ENCODE measurements at regions of chr1 and their contacts with region 1.

Region 1: DNA sequence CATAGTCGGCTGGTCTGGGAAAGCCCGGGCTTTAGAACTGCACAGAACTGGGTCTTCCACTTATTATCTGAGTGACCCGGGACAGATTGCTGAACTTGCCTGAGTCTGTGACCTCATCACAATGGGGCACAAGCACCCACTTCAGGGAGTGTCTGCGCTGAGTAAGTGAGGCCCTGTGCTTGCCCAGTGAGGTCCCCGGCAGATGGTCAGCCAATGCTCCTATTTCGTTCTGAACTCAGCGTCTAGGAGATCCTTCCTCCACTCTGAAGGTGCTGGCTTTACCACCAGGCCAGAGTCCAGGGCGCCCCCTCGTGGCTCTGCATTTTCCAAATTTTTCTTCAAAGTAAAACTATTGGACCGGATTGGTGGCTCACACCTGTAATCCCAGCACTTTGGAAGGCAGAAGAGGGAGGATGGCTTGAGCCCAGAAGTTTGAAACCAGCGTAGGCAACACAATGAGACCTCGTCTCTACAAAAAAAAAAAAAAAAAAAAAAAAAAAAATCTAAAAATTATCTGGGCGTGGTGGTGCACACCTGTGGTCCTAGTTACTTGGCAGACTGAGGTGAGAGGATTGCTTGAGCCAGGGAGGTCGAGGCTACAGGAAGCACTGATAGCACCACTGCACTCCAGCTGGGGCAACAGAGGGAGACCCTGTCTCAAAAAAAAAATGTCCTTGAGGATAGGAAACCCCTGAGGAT is 61.7 kb downstream of the FCRL5 start:
- DNase-seq: peak in 6 of 9 experiments; percentile 6 to 54 (median 44)
- ATAC-seq: no peak
- H3K4me3 ChIP-seq: no peak overlapping the region
- H3K4me3 Mint-ChIP-seq: no peak overlapping the region
- H3K27ac ChIP-seq: no peak overlapping the region
- H3K27ac Mint-ChIP-seq: no peak overlapping the region
- H3K4me1 ChIP-seq: no peaks in the 10 kb centered on the region
- H3K4me1 Mint-ChIP-seq: no peaks in the 10 kb centered on the region
- H3K27me3 ChIP-seq: no peaks in the 10 kb centered on the region
- H3K27me3 Mint-ChIP-seq: peaks cover 24% of the 10 kb centered on the region
- CTCF ChIP-seq: peak; percentile 40

Region 2: GRCh38 chr1:157163273-157164127 is 327.1 kb before region 1 on chr1:
- CTCF ChIA-PET with region 1: no interaction called
- POLR2A ChIA-PET with region 1: no interaction called
- intact Hi-C with region 1: loop called in 1 of 2 experiments (anchors 2 kb)
- DNase-seq: peak; percentile 57 to 83 (median 70)
- ATAC-seq: peak; percentile 76
- H3K4me3 ChIP-seq: no peak overlapping the region
- H3K4me3 Mint-ChIP-seq: no peak overlapping the region
- H3K27ac ChIP-seq: no peak overlapping the region
- H3K27ac Mint-ChIP-seq: no peak overlapping the region
- H3K4me1 ChIP-seq: no peaks in the 10 kb centered on the region
- H3K4me1 Mint-ChIP-seq: no peaks in the 10 kb centered on the region
- H3K27me3 ChIP-seq: peaks cover 3 to 7% of the 10 kb centered on the region in 2 experiments
- H3K27me3 Mint-ChIP-seq: peaks cover 6% of the 10 kb centered on the region
- CTCF ChIP-seq: peak; percentile 97

Region 3: DNA sequence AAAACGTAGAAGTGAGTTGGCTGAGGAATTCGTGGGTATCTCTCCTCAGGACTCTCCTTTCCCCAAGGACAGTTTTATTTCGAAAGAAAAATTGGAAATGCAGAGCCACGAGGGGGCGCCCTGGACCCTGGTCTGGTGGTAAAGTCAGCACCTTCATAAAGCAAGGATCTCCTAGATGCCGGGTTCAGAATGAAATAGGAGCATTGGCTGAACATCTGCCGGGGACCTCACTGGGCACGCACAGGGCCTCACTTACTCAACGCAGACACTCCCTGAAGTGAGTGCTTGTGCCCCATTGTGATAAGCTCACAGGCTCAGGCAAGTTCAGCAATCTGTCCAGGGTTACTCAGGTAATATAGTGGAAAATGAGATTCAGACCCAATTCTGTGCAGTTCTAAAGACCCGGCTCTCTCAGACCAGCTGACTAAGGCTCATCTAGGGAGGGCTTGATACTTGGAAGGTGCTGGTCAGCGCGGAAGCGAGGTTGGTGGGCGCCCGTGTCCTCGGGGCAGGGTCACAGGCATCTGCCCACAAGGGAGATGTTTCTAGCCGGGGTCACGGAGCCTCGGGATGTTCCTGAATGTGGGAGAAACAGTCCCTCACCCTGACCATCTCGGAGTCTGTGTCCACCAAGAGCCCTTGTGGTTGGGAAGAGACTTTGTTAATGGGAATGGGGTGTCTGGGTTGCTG is 296.8 kb before region 1 on chr1:
- CTCF ChIA-PET with region 1: no interaction called
- POLR2A ChIA-PET with region 1: no interaction called
- intact Hi-C with region 1: loop called (anchors 2 to 5 kb)
- DNase-seq: peak in 8 of 9 experiments; percentile 7 to 58 (median 42)
- ATAC-seq: no peak
- H3K4me3 ChIP-seq: no peak overlapping the region
- H3K4me3 Mint-ChIP-seq: no peak overlapping the region
- H3K27ac ChIP-seq: no peak overlapping the region
- H3K27ac Mint-ChIP-seq: no peak overlapping the region
- H3K4me1 ChIP-seq: no peaks in the 10 kb centered on the region
- H3K4me1 Mint-ChIP-seq: peaks cover 6% of the 10 kb centered on the region
- H3K27me3 ChIP-seq: no peaks in the 10 kb centered on the region
- H3K27me3 Mint-ChIP-seq: peaks cover 40% of the 10 kb centered on the region
- CTCF ChIP-seq: peak; percentile 66

Region 4: GRCh38 chr1:157937744-157938143 is 447.1 kb after region 1 on chr1:
- CTCF ChIA-PET with region 1: no interaction called
- POLR2A ChIA-PET with region 1: no interaction called
- intact Hi-C with region 1: no loop called
- DNase-seq: no peak
- ATAC-seq: no peak
- H3K4me3 ChIP-seq: no peak overlapping the region
- H3K4me3 Mint-ChIP-seq: no peak overlapping the region
- H3K27ac ChIP-seq: no peak overlapping the region
- H3K27ac Mint-ChIP-seq: no peak overlapping the region
- H3K4me1 ChIP-seq: no peaks in the 10 kb centered on the region
- H3K4me1 Mint-ChIP-seq: no peaks in the 10 kb centered on the region
- H3K27me3 ChIP-seq: no peaks in the 10 kb centered on the region
- H3K27me3 Mint-ChIP-seq: peaks cover 8% of the 10 kb centered on the region
- CTCF ChIP-seq: no peak

Measured in CD8-positive, alpha-beta T cell (primary cell).